WTC11 (cell line): ENCODE measurements at regions of chr7 and their contacts with region 1.

Region 1: GRCh38 chr7:29189743-29190201 is 4.8 kb upstream of the CHN2 start:
- DNase-seq: peak; percentile 97
- ATAC-seq: peak; percentile 87
- H3K4me3 Mint-ChIP-seq: peak overlapping the region; percentile 46
- H3K27ac Mint-ChIP-seq: peak overlapping the region; percentile 45; the same call in 1 of the 2 replicates
- H3K4me1 Mint-ChIP-seq: peaks cover 46% of the 10 kb centered on the region
- H3K27me3 Mint-ChIP-seq: peaks cover 48% of the 10 kb centered on the region
- CTCF ChIP-seq: peak; percentile 87

Region 2: DNA sequence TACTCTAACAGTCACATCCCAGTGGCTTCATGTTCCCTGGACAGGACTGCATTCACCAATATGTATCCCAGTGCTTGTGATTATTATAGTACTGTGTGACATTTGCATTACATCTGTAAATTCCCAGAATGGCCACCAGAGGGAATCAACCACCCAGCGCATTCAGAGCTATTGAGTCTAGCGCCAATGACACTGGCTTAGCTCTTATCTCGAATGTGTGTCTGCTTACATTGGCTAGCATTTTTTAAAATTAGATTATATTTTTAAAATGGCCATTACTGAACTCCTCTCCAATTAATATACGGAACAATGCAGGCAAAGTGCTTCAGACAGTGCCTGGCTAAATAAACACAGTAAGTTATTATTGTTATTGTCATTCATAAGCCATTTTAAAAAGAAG is 267.9 kb before region 1 on chr7:
- CTCF ChIA-PET with region 1: interaction called, 27 read pairs
- POLR2A ChIA-PET with region 1: no interaction called
- DNase-seq: peak; percentile 34
- ATAC-seq: peak; percentile 88
- H3K4me3 Mint-ChIP-seq: no peak overlapping the region
- H3K27ac Mint-ChIP-seq: no peak overlapping the region
- H3K4me1 Mint-ChIP-seq: peaks cover 29% of the 10 kb centered on the region
- H3K27me3 Mint-ChIP-seq: peaks cover 8% of the 10 kb centered on the region
- CTCF ChIP-seq: peak; percentile 85

Region 3: DNA sequence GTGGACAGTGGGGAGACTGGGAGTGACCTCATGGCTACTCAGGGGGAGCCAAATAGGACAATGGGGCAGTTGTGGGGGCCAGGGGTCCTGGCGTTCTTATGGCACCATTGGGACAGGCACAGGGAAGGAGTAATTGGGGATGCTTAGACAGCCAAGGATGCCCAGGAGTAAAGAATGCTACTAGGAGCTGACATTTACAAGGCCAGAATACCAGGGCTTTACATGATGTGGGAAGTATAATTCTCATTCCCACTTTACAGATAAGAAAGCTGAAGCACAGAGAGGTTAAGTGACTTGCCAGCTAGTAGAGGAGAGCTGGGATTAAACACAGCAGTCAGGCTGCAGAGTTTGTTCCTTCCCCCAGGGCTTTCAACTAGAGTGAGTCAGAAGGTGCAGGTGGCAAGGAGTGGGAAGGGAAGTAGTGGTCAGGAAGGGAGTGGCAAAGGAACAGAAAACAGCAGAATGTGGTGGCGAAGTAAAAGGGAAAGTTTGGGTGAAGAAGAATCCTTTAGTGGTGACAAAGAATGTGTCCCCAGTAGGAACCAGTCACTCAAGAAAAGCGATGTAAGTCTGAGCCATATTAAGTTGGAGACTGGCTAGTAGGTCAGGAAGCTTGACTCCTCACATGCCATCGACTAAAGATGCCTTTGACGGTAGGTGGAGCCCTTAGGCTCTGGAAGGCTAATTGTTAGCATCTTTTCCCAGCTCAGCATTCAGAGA is 76.2 kb before region 1 on chr7:
- CTCF ChIA-PET with region 1: interaction called, 37 read pairs
- POLR2A ChIA-PET with region 1: no interaction called
- DNase-seq: peak; percentile 28
- ATAC-seq: peak; percentile 92
- H3K4me3 Mint-ChIP-seq: no peak overlapping the region
- H3K27ac Mint-ChIP-seq: peak overlapping the region; percentile 66
- H3K4me1 Mint-ChIP-seq: peaks cover 33% of the 10 kb centered on the region
- H3K27me3 Mint-ChIP-seq: no peaks in the 10 kb centered on the region
- CTCF ChIP-seq: no peak

Region 4: GRCh38 chr7:29167721-29168120 is 22.1 kb before region 1 on chr7:
- CTCF ChIA-PET with region 1: interaction called, 13 read pairs
- POLR2A ChIA-PET with region 1: no interaction called
- DNase-seq: no peak
- ATAC-seq: no peak
- H3K4me3 Mint-ChIP-seq: no peak overlapping the region
- H3K27ac Mint-ChIP-seq: no peak overlapping the region
- H3K4me1 Mint-ChIP-seq: no peaks in the 10 kb centered on the region
- H3K27me3 Mint-ChIP-seq: no peaks in the 10 kb centered on the region
- CTCF ChIP-seq: no peak

Region 5: GRCh38 chr7:29239638-29240037 is 49.9 kb after region 1 on chr7:
- CTCF ChIA-PET with region 1: interaction called, 14 read pairs
- POLR2A ChIA-PET with region 1: no interaction called
- DNase-seq: peak; percentile 58
- ATAC-seq: peak; percentile 82
- H3K4me3 Mint-ChIP-seq: no peak overlapping the region
- H3K27ac Mint-ChIP-seq: no peak overlapping the region
- H3K4me1 Mint-ChIP-seq: peaks cover 24% of the 10 kb centered on the region
- H3K27me3 Mint-ChIP-seq: no peaks in the 10 kb centered on the region
- CTCF ChIP-seq: peak; percentile 67

Region 6: DNA sequence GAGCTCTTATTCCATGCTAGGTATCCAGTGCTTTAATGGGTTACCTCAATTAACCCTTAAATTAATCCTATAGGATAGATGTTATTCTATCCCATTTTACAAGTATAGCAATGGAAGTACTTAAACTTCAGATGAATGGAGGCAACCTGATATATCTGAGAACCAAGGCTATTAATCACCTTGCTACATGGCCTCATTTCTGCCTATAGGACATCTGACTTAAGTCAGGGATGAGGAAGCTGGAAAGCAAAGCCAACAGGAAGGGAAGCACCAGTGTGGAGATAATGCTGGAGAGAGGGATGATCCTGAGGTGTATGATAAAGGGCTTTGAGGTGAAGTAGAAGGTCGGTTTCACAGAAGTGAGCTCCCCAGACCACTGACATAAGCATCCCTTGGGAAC is 137.1 kb after region 1 on chr7:
- CTCF ChIA-PET with region 1: interaction called, 12 read pairs
- POLR2A ChIA-PET with region 1: no interaction called
- DNase-seq: no peak
- ATAC-seq: no peak
- H3K4me3 Mint-ChIP-seq: no peak overlapping the region
- H3K27ac Mint-ChIP-seq: no peak overlapping the region
- H3K4me1 Mint-ChIP-seq: peaks cover 32% of the 10 kb centered on the region
- H3K27me3 Mint-ChIP-seq: no peaks in the 10 kb centered on the region
- CTCF ChIP-seq: no peak